CD8-positive, alpha-beta memory T cell (primary cell): ENCODE measurements at regions of chr9 and their contacts with region 1.

Region 1: GRCh38 chr9:96327694-96328352 is 25.8 kb upstream of the HSD17B3 start:
- DNase-seq: peak in 4 of 5 donors; percentile 23 to 55 (median 49)
- H3K4me3 ChIP-seq: no peak overlapping the region
- H3K4me3 Mint-ChIP-seq: no peak overlapping the region
- H3K27ac ChIP-seq: no peak overlapping the region
- H3K27ac Mint-ChIP-seq: no peak overlapping the region
- H3K4me1 ChIP-seq: no peaks in the 10 kb centered on the region
- H3K4me1 Mint-ChIP-seq: no peaks in the 10 kb centered on the region
- H3K27me3 ChIP-seq: no peaks in the 10 kb centered on the region
- H3K27me3 Mint-ChIP-seq: no peaks in the 10 kb centered on the region

Region 2: DNA sequence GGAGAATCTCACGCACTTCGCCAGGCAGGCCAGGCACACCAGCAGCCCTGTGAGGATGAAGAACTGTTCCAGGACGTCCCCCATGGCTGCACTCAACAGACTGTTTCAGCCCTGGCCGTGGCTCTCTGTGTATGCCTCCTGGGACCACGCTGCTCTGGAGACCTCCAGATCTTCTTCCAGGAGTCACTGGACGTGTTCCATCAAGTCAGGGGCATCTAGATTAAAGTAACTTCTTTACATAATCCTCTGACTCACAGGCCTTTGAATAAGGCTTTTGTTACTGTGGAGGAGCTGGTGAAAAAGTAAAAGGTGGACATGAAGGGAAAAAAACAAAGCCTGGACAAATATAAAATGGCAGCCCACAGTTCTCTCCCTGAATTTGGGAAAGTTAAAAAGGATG is 25.8 kb before region 1 on chr9 and contains the start of gene HSD17B3:
- CTCF ChIA-PET with region 1: no interaction called
- POLR2A ChIA-PET with region 1: no interaction called
- DNase-seq: no peak
- H3K4me3 ChIP-seq: no peak within 1 kb of the TSS
- H3K4me3 Mint-ChIP-seq: no peak within 1 kb of the TSS
- H3K27ac ChIP-seq: no peak within 1 kb of the TSS
- H3K27ac Mint-ChIP-seq: no peak within 1 kb of the TSS
- H3K4me1 ChIP-seq: no peaks in the 10 kb centered on the region
- H3K4me1 Mint-ChIP-seq: no peaks in the 10 kb centered on the region
- H3K27me3 ChIP-seq: no peaks in the 10 kb centered on the region
- H3K27me3 Mint-ChIP-seq: peaks cover 2 to 4% of the 10 kb centered on the region in 2 donors
- total RNA-seq, gene HSD17B3: 0.35 to 0.42 TPM

Region 3: DNA sequence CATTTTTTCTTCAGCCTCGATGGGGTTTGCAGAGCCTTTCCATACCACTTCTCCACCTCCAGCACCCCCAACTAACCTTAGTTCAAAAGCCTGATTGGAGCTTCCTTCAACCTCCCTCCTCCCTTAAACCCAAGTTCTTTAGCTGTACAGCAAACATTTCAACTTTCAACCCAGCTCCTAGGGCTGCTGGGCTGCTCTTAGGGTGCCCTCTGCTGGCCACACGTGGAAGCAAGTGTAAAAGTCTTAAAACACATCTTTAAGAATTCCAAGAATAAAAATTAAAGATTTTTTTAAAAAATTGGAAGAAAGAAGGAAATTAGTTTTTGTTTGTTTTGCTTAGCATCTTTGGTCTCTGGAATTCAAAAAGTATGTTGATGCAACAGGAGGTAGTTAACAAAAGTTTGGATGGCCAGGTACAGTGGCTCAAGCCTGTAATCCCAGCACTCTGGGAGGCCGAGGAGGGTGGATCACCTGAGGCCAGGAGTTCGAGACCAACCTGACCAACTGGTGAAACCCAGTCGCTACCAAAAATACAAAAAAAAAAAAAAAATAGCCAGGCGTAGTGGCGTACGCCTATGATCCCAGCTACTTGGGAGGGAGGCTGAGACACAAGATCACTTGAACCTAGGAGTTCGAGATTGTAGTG is 10.4 kb before region 1 on chr9:
- CTCF ChIA-PET with region 1: interaction called, 34 read pairs
- POLR2A ChIA-PET with region 1: no interaction called
- DNase-seq: peak; percentile 16 to 69 (median 25)
- H3K4me3 ChIP-seq: no peak overlapping the region
- H3K4me3 Mint-ChIP-seq: no peak overlapping the region
- H3K27ac ChIP-seq: no peak overlapping the region
- H3K27ac Mint-ChIP-seq: no peak overlapping the region
- H3K4me1 ChIP-seq: no peaks in the 10 kb centered on the region
- H3K4me1 Mint-ChIP-seq: peaks cover 0 to 2% (median 2%) of the 10 kb centered on the region in 3 donors
- H3K27me3 ChIP-seq: no peaks in the 10 kb centered on the region
- H3K27me3 Mint-ChIP-seq: peaks cover 2 to 6% of the 10 kb centered on the region in 2 donors

Region 4: GRCh38 chr9:96344458-96345180 is 16.8 kb after region 1 on chr9:
- CTCF ChIA-PET with region 1: interaction called, 10 read pairs
- POLR2A ChIA-PET with region 1: no interaction called
- DNase-seq: no peak
- H3K4me3 ChIP-seq: no peak overlapping the region
- H3K4me3 Mint-ChIP-seq: no peak overlapping the region
- H3K27ac ChIP-seq: no peak overlapping the region
- H3K27ac Mint-ChIP-seq: peak overlapping the region in 1 of 8 donors; percentile 74
- H3K4me1 ChIP-seq: no peaks in the 10 kb centered on the region
- H3K4me1 Mint-ChIP-seq: peaks cover 0 to 2% (median 0%) of the 10 kb centered on the region in 3 donors
- H3K27me3 ChIP-seq: no peaks in the 10 kb centered on the region
- H3K27me3 Mint-ChIP-seq: no peaks in the 10 kb centered on the region